Left ventricle myocardium inferior (tissue), 1 donor: ENCODE measurements at regions of chr3 and their contacts with region 1.

Region 1: GRCh38 chr3:196837819-196838420 is 29.8 kb upstream of the SENP5 start:
- DNase-seq: peak; percentile 50
- H3K4me3 ChIP-seq: no peak overlapping the region
- H3K27ac ChIP-seq: no peak overlapping the region
- H3K4me1 ChIP-seq: no peaks in the 10 kb centered on the region
- H3K27me3 ChIP-seq: no peaks in the 10 kb centered on the region
- CTCF ChIP-seq: peak; percentile 78

Region 2: DNA sequence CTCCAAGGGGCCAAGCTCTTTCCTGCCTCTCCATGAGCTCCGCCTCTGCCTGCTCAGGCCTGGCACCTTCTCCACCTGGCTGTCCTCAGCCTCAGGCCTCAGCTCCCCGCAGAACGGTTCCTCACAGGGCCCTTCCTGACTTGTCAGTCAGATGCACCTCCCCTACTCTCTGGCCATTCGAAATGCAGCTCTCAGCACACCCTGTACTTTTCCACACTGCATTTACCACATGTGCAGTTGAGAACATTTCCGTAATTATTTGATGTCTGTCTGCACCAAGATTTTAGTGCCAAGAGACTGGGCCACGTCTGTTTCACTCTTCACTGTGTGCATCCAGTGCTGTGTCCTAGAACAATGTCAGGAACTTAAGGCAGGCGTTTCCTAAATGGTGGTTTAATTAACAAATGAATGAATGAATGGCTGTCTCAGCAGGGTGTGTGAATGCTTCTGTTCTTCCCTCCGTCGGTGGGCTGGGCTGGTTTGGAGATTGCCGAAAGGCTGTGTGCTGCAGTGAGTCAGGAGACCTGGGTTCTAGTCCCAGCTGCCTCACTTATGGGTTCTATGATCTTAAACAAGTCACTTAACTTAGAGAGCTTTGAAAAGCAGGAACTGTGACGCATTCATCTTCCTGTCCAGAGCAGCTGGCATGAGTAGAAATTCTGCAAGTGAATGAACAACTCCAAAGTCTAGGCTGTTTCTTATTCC is 1031.6 kb before region 1 on chr3:
- intact Hi-C with region 1: no loop called
- DNase-seq: no peak
- H3K4me3 ChIP-seq: no peak overlapping the region
- H3K27ac ChIP-seq: peak overlapping the region; percentile 30
- H3K4me1 ChIP-seq: peaks cover 13% of the 10 kb centered on the region
- H3K27me3 ChIP-seq: peaks cover 45% of the 10 kb centered on the region
- CTCF ChIP-seq: no peak

Region 3: DNA sequence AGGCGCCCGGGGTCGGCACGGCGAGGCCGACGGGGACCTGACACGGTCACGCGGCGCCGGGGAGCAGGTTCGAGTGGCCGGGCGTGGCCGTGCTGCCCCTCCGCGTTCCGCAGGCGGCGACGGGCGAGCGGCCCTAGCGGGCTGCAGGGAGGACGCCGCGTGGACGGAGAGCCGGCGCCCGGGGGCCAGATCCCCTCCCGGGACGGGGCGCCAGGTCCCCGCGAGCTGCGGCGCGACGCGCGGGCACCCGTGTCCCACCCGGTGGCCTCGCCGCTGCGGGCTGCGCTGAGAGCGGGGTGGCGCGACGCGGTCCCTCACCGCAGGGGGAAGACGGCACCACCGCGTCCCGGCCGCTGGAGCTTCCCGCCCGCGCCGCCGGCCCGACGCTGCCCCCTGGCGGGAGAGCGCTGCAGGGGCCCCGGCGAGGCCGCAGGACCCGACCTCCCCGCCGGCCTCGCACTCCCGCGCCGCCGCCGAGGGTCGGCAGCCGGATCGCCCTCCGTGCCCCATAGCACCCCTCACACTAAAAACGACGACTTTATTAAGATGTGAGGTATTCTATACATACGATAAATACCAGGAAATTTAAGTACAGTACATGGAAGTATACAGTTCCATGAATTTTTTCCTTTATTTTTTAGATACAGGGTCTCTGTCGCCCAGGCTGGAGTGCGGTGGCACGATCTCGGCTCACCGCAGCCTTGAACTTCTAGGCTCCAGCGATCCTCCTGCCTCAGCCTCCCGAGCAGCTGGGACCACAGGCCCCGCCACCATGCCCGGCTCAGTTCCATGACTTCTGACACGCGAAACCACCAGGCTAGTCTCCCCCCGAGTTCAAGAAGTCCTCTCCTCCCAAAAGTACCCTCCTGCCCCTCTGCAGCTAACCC is 132.0 kb after region 1 on chr3:
- intact Hi-C with region 1: loop called (anchors 10 kb)
- DNase-seq: peak; percentile 60
- H3K4me3 ChIP-seq: peak overlapping the region; percentile 94
- H3K27ac ChIP-seq: peak overlapping the region; percentile 89
- H3K4me1 ChIP-seq: peaks cover 23% of the 10 kb centered on the region
- H3K27me3 ChIP-seq: no peaks in the 10 kb centered on the region
- CTCF ChIP-seq: peak; percentile 94